PC-9 (cell line): ENCODE measurements at regions of chr4 and their contacts with region 1.

Region 1: DNA sequence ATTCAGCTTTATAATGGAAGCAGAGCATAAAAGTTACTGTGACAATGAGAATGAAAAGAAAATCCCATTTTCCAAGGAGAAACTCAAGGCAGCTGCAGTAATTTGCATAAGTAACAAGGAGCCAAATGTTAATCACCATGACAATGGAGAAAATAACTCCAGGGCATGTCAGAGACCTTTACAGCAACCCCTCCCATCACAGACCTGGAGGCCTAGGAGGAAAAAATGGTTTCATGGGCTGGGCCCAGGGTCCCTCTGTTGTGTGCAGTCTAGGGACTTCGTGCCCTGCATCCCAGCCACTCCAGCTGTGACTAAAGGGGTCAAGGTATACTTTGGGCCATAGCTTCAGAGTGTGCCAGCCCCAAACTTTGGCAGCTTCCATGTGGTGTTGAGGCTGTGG is 223.5 kb downstream of the NPFFR2 start:
- DNase-seq: no peak
- H3K4me3 ChIP-seq: no peak overlapping the region
- H3K27ac ChIP-seq: no peak overlapping the region
- H3K4me1 ChIP-seq: no peaks in the 10 kb centered on the region
- H3K27me3 ChIP-seq: no peaks in the 10 kb centered on the region
- CTCF ChIP-seq: no peak

Region 2: DNA sequence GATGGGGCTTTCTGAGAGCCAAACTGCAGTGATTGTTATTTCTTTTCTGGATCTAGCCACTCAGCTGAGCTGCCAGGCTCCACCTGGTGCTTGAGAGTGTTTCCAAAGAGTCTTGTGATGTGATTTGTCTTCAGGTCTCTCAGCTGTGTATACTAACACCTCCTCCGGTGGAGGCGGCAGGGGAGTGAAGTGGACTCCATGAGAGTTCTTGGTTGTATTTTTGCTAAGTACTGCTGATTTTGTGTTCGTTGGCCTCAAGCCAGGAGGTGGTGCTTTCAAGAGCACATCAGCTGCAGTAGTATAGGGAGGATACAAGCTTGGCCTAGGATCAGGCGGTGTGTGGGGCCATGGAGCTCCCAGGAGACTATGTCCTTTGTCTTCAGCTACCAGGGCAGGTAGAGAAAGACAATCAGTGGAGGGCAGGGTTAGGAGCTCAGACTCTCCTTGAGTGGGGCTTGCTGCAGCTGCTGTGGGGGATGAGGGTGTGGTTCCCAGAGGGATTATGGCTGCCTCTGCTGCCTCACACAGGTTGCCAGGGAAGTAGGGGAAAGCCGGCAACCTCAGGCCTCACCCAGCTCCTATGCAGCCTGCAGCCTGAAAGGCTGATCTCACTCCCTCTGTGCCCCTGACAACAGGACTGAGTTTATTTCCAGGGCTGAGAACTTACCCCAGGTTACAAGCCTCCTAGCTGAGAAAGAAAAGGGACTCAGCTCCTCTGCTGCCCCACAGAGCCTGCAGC is 161.0 kb before region 1 on chr4:
- CTCF ChIA-PET with region 1: interaction called, 10 read pairs
- POLR2A ChIA-PET with region 1: no interaction called
- intact Hi-C with region 1: no loop called
- DNase-seq: no peak
- H3K4me3 ChIP-seq: no peak overlapping the region
- H3K27ac ChIP-seq: no peak overlapping the region
- H3K4me1 ChIP-seq: no peaks in the 10 kb centered on the region
- H3K27me3 ChIP-seq: no peaks in the 10 kb centered on the region
- CTCF ChIP-seq: no peak